ENCODE measurements at regions of chr6 and their contacts with region 1.

Region 1: DNA sequence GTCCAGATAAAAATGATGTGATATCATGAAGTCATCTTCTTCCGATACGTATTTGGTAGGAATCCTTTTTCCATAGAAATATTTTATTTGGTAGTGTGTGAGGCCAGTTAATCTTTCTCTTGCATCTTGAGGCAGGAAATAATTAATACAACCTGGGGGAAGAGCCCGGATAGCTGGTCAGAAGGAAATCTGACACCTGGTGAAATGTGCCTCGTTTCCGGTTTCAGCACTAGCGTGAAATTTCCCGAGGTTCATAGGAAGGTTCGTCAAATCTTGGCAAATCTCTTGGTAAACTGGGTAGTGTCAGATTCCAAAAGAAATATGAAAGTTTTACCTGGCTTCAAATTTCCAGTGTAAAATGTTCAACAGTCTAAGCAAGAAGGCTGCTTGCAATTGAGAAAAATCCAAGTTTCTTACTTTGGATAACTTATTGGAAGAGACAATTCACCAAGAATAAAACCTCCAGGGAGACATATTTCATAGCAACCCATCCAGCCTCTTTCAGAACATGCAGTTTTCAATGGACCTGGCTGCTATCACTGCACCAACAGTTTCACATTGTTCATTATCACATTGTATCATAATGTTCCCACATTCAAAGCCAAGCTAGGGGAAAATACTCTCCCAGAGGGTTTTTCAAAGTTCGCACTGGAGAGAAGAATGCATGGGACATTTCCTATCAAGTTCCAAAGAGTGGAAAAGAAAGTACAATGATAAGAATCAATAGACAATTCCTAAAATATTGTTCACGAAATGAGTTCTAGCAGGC is 454.5 kb upstream of the CITED2 start:
- DNase-seq: no peak
- ATAC-seq: no peak
- H3K4me3 ChIP-seq: peak overlapping the region in 1 of 4 donors; percentile 14
- H3K27ac ChIP-seq: no peak overlapping the region
- H3K4me1 ChIP-seq: peaks cover 20 to 24% of the 10 kb centered on the region in 2 donors
- H3K27me3 ChIP-seq: no peaks in the 10 kb centered on the region
- CTCF ChIP-seq: no peak
- POLR2A ChIP-seq: no peak

Region 2: GRCh38 chr6:139779988-139780774 is 48.8 kb before region 1 on chr6:
- in situ Hi-C with region 1: no loop called
- intact Hi-C with region 1: loop called (anchors 1 kb)
- DNase-seq: no peak
- ATAC-seq: peak in 1 of 2 donors; percentile 32
- H3K4me3 ChIP-seq: no peak overlapping the region
- H3K27ac ChIP-seq: peak overlapping the region in 3 of 4 donors; percentile 20 to 67 (median 24)
- H3K4me1 ChIP-seq: peaks cover 22 to 33% of the 10 kb centered on the region in 2 donors
- H3K27me3 ChIP-seq: no peaks in the 10 kb centered on the region
- CTCF ChIP-seq: no peak
- POLR2A ChIP-seq: no peak